Heart left ventricle (tissue), 16 donors: ENCODE measurements at regions of chr5 and their contacts with region 1.

Region 1: DNA sequence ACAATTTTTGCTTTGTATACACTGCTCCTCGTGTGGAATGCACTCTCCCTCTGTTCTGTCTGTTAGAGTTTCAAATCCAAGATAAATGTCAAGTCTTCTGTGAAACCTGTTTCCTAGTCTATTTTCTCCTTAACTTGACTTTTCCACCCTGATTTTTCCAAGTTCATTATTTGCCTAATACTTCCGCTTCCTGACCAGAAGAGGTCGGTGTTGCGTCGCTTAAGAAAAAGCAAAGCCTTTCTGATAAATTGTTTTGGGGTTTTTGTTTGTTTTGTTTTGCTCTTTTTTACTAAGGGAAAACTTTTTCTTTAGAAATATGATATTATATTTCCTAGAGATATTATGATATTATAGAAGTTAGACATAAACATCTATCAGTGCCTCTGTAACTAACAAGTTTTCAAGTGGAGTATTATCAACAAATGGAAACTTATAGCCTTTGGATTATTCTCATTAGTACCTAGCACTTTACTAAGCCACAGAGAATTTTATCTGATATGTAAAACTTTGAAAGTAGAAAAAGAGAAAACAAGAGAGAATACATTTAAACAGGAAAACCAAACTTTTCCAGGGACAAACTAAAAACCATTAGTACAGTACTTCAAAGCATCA is 55.8 kb downstream of the PHAX start:
- DNase-seq: no peak
- ATAC-seq: no peak
- H3K4me3 ChIP-seq: no peak overlapping the region
- H3K27ac ChIP-seq: no peak overlapping the region
- H3K4me1 ChIP-seq: no peaks in the 10 kb centered on the region
- H3K27me3 ChIP-seq: no peaks in the 10 kb centered on the region
- CTCF ChIP-seq: peak; percentile 57 to 87 (median 70)
- POLR2A ChIP-seq: no peak

Region 2: GRCh38 chr5:126776497-126777256 is 120.2 kb after region 1 on chr5 and contains the start of gene LMNB1:
- intact Hi-C with region 1: loop called in 5 of 10 experiments (anchors 5 kb)
- DNase-seq: peak; percentile 94 to 98 (median 95)
- ATAC-seq: peak; percentile 91 to 97 (median 95)
- H3K4me3 ChIP-seq: peak within 1 kb of the TSS; percentile 64 to 88 (median 80)
- H3K27ac ChIP-seq: peak within 1 kb of the TSS; percentile 55 to 94 (median 86)
- H3K4me1 ChIP-seq: peaks cover 0 to 33% (median 11%) of the 10 kb centered on the region in 12 donors
- H3K27me3 ChIP-seq: no peaks in the 10 kb centered on the region
- CTCF ChIP-seq: peak in 4 of 12 donors; percentile 13 to 39 (median 25)
- POLR2A ChIP-seq: peak in 1 of 2 donors; percentile 26
- total RNA-seq, gene LMNB1: 1.3 to 27.8 (median 1.8) TPM

Region 3: DNA sequence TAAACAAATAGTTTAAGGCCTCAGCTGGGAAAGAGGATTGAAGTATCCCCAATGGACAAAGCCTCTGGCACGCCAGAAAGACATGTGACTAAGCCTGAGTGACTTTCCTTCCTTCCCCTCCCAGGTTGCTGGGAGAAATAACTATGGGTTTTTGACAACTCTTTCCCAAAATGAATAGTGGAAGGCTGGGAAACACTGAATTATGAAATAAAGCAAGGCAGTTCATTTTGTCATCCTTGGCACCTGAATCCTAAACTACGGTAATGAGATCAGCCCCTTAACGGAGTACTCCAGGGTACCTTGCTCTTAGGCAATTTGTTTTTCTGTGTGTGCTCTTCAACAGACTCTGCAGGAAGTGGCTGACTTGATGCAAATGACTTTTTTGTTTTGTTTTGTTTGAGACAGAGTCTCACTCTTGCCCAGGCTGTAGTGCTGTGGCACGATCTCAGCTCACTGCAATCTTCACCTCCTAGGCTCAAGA is 195.6 kb after region 1 on chr5:
- intact Hi-C with region 1: no loop called
- DNase-seq: peak in 1 of 5 donors; percentile 23
- ATAC-seq: peak; percentile 19 to 62 (median 48)
- H3K4me3 ChIP-seq: peak overlapping the region in 2 of 12 donors; percentile 11 to 13
- H3K27ac ChIP-seq: peak overlapping the region; percentile 14 to 83 (median 47)
- H3K4me1 ChIP-seq: peaks cover 0 to 56% (median 32%) of the 10 kb centered on the region in 12 donors
- H3K27me3 ChIP-seq: no peaks in the 10 kb centered on the region
- CTCF ChIP-seq: no peak
- POLR2A ChIP-seq: no peak

Region 4: DNA sequence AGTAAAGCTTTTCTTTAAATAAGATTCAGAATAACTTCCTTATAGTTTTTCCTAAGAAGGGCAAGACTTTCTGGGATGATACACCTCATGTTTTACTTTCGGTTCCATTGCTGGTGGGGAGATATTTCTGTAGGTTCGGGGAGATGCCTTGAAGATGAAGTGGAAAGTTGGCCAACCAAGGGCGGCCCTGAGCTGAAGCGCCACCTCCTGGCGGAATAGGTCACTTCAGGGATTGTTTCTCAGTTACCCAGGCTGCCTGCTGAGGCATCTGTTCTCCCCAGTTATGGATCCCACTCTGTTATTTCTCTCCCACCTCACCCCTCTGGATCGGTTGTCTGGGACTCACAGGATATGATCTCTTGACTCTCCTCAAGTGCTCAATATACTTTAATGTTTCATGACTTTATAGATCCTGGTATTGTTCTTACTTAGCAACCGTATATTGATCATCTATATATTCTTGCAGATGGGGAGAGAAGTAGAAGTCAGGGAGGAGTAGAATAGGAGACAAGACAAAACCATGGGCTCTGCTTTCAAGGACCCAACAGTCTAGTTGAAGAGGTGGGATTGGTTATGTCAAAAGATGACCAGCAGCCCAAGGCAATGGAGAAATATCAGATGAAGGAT is 657.5 kb after region 1 on chr5:
- intact Hi-C with region 1: loop called in 5 of 10 experiments (anchors 5 to 10 kb)
- DNase-seq: peak; percentile 34 to 64 (median 48)
- ATAC-seq: peak in 3 of 4 donors; percentile 64 to 68 (median 66)
- H3K4me3 ChIP-seq: no peak overlapping the region
- H3K27ac ChIP-seq: no peak overlapping the region
- H3K4me1 ChIP-seq: no peaks in the 10 kb centered on the region
- H3K27me3 ChIP-seq: no peaks in the 10 kb centered on the region
- CTCF ChIP-seq: peak; percentile 68 to 86 (median 78)
- POLR2A ChIP-seq: no peak

Region 5: GRCh38 chr5:127492854-127493738 is 836.6 kb after region 1 on chr5:
- intact Hi-C with region 1: loop called in 4 of 10 experiments (anchors 5 to 10 kb)
- DNase-seq: no peak
- ATAC-seq: no peak
- H3K4me3 ChIP-seq: no peak overlapping the region
- H3K27ac ChIP-seq: no peak overlapping the region
- H3K4me1 ChIP-seq: no peaks in the 10 kb centered on the region
- H3K27me3 ChIP-seq: peaks cover 0 to 14% (median 0%) of the 10 kb centered on the region in 9 donors
- CTCF ChIP-seq: peak; percentile 54 to 77 (median 68)
- POLR2A ChIP-seq: no peak